Mucosa of descending colon (tissue), 3 donors: ENCODE measurements at regions of chr7 and their contacts with region 1.

Region 1: GRCh38 chr7:151368136-151368571 is 26.5 kb downstream of the NUB1 start:
- DNase-seq: peak; percentile 83 to 90 (median 87)
- ATAC-seq: peak; percentile 99
- H3K4me3 ChIP-seq: no peak overlapping the region
- H3K4me1 ChIP-seq: no peaks in the 10 kb centered on the region
- CTCF ChIP-seq: peak; percentile 88

Region 2: DNA sequence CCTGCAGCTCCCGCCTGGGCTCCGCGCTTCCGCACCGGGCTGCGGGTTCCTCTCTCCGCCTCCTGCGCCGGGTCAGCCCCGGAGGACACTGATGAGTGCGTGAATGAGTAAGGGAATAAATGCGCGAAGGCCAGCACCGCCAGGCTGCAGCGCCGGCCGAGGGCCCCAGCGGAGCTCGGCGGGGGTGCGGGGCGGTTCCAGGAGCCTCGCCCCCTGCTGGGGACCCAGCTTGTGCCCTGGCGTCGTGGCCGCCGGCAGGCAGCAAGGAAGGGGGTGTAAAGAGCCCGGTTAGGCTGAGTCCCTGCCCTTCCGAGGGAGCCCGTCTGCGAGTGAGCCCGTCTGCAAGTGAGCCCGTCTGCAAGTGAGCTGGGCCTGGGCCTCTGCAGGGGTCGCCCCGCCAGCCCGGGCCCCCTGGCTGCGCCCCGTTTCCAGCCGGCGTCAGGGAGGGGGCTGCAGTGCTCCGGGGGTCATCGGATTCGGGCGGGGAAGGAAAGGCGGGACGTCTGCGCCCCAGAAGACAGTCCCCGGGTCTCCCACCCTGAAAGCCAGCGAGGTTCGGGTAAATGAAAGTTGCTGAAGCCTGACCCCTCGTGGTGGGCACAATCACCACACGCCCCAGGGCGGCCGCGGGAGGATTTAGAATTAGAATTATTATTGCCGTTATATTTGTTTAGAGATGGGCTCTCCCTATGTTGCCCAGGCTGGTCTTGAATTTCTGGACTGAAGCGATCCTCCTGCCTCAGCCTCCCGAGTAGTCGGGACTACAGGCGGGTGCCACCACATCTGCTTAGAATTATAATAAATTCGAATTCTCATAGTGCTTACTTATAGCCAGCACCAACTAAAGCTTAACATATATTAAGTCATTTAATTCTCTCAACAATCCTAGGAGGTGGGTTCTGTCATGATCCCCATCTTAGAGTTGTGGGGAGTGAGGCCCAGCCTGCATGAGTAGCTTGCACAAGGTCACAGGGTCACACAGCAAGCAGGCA is 80.4 kb after region 1 on chr7:
- intact Hi-C with region 1: loop called (anchors 2 to 5 kb)
- DNase-seq: peak in 2 of 3 donors; percentile 78 to 81
- ATAC-seq: peak; percentile 86
- H3K4me3 ChIP-seq: no peak overlapping the region
- H3K4me1 ChIP-seq: no peaks in the 10 kb centered on the region
- CTCF ChIP-seq: peak; percentile 71

Region 3: GRCh38 chr7:151494301-151495284 is 126.4 kb after region 1 on chr7:
- intact Hi-C with region 1: no loop called
- DNase-seq: no peak
- ATAC-seq: no peak
- H3K4me3 ChIP-seq: no peak overlapping the region
- H3K4me1 ChIP-seq: peaks cover 29% of the 10 kb centered on the region
- CTCF ChIP-seq: no peak

Region 4: GRCh38 chr7:151759591-151760042 is 391.5 kb after region 1 on chr7:
- intact Hi-C with region 1: loop called in 1 of 2 experiments (anchors 10 kb)
- DNase-seq: peak in 1 of 3 donors; percentile 66
- ATAC-seq: peak; percentile 59
- H3K4me3 ChIP-seq: no peak overlapping the region
- H3K4me1 ChIP-seq: peaks cover 18% of the 10 kb centered on the region
- CTCF ChIP-seq: peak; percentile 48